Ovary (tissue), 10 donors: ENCODE measurements at regions of chr1 and their contacts with region 1.

Region 1: DNA sequence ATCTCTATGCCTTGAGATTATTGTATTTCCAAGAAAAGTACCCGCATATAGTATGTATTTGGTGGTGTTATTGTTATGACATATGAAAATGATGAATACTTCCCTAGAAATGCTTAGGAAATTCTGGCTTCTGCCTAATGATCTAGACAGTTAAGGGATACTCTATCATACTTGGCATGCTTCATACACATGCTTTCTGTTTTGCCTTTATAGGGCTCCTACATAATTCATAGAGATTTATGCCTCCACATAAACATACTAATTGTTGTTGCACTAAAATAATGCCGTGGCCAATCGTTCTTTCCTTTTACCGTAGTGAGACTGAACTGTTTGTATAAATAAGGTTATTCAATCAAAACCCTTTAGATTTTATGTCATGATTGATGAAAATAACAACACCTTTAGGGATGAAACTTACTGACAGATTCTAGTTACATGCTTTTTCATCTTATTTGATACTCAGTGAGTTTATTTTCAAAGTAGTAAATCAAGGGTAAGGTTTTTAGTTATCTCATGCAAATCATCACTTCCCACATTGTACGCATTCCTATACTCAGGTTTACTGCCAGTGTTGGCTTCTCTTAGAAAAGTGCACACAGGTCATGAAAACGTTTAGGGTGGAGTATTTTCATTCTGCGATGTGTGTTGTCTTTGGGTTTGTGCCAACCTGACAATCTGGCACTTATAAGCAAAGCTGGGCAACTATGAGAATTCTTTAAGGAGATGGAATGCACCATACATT is 40.5 kb upstream of the SCYL3 start:
- DNase-seq: no peak
- H3K4me3 ChIP-seq: no peak overlapping the region
- H3K27ac ChIP-seq: no peak overlapping the region
- H3K4me1 ChIP-seq: no peaks in the 10 kb centered on the region
- H3K27me3 ChIP-seq: no peaks in the 10 kb centered on the region
- CTCF ChIP-seq: no peak
- EP300 ChIP-seq: no peak
- POLR2A ChIP-seq: no peak

Region 2: DNA sequence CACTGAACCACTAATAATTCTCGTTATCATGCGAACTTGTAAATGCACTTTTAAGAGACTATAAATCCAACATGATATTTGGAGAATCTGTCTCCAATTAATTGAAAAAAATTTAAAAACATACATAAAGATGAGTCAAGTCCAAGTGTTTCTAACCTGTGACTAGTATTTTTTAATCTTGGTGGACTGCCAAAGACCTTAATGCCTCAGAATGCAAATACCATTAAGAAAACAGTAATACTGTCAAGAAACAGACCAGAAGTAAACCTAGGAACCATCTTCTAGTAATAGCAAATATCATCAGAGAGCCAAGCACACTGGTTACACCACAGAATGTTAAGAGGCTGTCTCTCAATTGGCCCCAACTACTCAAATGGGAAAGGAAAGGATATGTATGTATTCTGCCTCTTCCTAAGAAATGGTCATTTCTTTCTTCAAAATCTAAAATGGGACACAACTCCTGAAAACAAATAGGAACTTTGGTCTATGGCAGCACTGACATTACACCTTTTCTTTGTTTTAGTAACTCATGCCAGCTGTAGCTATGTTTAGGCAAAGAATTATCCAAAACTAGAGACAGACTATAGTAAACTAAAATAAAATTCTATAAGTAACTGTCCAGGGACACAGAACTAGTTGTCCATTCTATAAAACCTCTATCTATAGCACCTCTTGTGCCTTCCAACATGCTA is 56.2 kb before region 1 on chr1:
- intact Hi-C with region 1: no loop called
- DNase-seq: no peak
- H3K4me3 ChIP-seq: no peak overlapping the region
- H3K27ac ChIP-seq: no peak overlapping the region
- H3K4me1 ChIP-seq: no peaks in the 10 kb centered on the region
- H3K27me3 ChIP-seq: no peaks in the 10 kb centered on the region
- CTCF ChIP-seq: no peak
- EP300 ChIP-seq: no peak
- POLR2A ChIP-seq: no peak

Region 3: GRCh38 chr1:170765712-170766330 is 831.7 kb after region 1 on chr1:
- intact Hi-C with region 1: loop called in 1 of 4 experiments (anchors 10 kb)
- DNase-seq: no peak
- H3K4me3 ChIP-seq: no peak overlapping the region
- H3K27ac ChIP-seq: no peak overlapping the region
- H3K4me1 ChIP-seq: no peaks in the 10 kb centered on the region
- H3K27me3 ChIP-seq: no peaks in the 10 kb centered on the region
- CTCF ChIP-seq: peak; percentile 44 to 86 (median 55)
- EP300 ChIP-seq: no peak
- POLR2A ChIP-seq: no peak